CD8-positive, alpha-beta T cell (primary cell): ENCODE measurements at regions of chr1 and their contacts with region 1.

Region 1: GRCh38 chr1:6602669-6603237 is at the start of gene KLHL21:
- DNase-seq: peak; percentile 68 to 94 (median 85)
- ATAC-seq: peak; percentile 56
- H3K4me3 ChIP-seq: peak within 1 kb of the TSS; percentile 87 to 89
- H3K4me3 Mint-ChIP-seq: peak within 1 kb of the TSS; percentile 97
- H3K27ac ChIP-seq: peak within 1 kb of the TSS; percentile 91 to 96
- H3K27ac Mint-ChIP-seq: peak within 1 kb of the TSS; percentile 97
- H3K4me1 ChIP-seq: peaks cover 34% of the 10 kb centered on the region
- H3K4me1 Mint-ChIP-seq: peaks cover 34% of the 10 kb centered on the region
- H3K27me3 ChIP-seq: no peaks in the 10 kb centered on the region
- H3K27me3 Mint-ChIP-seq: no peaks in the 10 kb centered on the region
- CTCF ChIP-seq: no peak
- total RNA-seq, gene KLHL21: 33.3 to 33.4 TPM

Region 2: DNA sequence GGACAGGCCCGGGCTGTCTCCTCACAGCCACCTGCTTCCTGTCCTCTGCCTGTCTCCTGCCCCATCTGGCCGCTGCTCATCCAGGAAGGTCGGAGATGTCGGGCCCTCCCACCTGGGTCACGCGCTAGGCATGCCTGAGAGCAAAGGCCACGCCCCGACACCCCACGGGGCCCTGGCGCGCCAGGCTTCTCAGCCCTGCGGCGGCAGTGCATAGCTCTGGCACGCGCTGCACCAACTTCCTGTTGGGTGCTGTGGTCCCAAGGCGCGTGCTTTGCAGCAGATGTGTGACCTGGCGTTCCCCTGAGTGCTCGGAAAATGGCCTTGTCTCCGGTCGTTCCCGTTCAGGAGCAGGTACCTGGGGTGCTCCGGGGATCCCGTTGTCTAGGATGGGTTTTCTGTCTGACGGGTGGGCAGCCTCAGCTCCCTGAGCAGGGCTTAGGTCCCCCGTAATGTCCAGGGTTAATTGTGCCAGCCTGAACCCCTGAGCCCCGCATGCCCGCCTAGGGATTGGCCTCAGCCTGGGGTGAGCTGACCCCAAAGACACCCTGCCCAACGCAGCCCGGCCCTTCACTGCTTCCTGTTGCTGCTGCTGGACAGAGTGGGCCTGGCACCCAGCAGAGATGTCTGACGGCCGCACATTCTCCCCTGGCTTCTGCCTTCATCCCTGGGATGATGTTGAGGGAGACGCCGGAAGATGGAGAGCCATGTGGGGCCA is 576.5 kb before region 1 on chr1:
- CTCF ChIA-PET with region 1: no interaction called
- POLR2A ChIA-PET with region 1: no interaction called
- intact Hi-C with region 1: loop called in 1 of 2 experiments (anchors 2 kb)
- DNase-seq: peak; percentile 87 to 98 (median 94)
- ATAC-seq: peak; percentile 73
- H3K4me3 ChIP-seq: peak overlapping the region; percentile 76 to 93
- H3K4me3 Mint-ChIP-seq: peak overlapping the region; percentile 90
- H3K27ac ChIP-seq: peak overlapping the region; percentile 85 to 94
- H3K27ac Mint-ChIP-seq: peak overlapping the region; percentile 99
- H3K4me1 ChIP-seq: peaks cover 54% of the 10 kb centered on the region
- H3K4me1 Mint-ChIP-seq: peaks cover 55% of the 10 kb centered on the region
- H3K27me3 ChIP-seq: no peaks in the 10 kb centered on the region
- H3K27me3 Mint-ChIP-seq: no peaks in the 10 kb centered on the region
- CTCF ChIP-seq: no peak

Region 3: DNA sequence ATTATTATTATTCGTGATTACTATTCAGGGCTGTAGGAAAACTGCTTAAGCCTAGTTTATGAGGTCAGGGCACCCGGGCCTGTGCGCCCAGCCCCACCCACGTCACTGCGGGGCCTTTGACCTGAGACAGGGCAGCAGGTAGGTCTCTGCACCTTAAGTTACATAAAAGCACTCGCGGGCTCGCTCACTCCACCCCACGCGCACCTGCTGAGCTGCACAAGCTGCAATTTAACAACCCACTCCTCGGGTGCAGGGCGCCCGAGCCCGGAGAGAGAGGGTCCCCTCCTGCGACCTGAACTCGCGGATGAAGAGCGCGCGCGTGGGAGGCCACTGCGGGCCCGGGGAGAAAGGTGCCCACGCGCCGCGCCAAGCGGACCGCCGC is 367.5 kb before region 1 on chr1:
- CTCF ChIA-PET with region 1: no interaction called
- POLR2A ChIA-PET with region 1: no interaction called
- intact Hi-C with region 1: loop called in 1 of 2 experiments (anchors 5 kb)
- DNase-seq: peak in 3 of 9 experiments; percentile 15 to 38 (median 17)
- ATAC-seq: peak; percentile 16
- H3K4me3 ChIP-seq: peak overlapping the region; percentile 62 to 63
- H3K4me3 Mint-ChIP-seq: peak overlapping the region; percentile 88
- H3K27ac ChIP-seq: peak overlapping the region in 1 of 2 experiments; percentile 21
- H3K27ac Mint-ChIP-seq: peak overlapping the region; percentile 45
- H3K4me1 ChIP-seq: peaks cover 12% of the 10 kb centered on the region
- H3K4me1 Mint-ChIP-seq: peaks cover 16% of the 10 kb centered on the region
- H3K27me3 ChIP-seq: peaks cover 4% of the 10 kb centered on the region in 2 experiments
- H3K27me3 Mint-ChIP-seq: peaks cover 10% of the 10 kb centered on the region
- CTCF ChIP-seq: no peak

Region 4: DNA sequence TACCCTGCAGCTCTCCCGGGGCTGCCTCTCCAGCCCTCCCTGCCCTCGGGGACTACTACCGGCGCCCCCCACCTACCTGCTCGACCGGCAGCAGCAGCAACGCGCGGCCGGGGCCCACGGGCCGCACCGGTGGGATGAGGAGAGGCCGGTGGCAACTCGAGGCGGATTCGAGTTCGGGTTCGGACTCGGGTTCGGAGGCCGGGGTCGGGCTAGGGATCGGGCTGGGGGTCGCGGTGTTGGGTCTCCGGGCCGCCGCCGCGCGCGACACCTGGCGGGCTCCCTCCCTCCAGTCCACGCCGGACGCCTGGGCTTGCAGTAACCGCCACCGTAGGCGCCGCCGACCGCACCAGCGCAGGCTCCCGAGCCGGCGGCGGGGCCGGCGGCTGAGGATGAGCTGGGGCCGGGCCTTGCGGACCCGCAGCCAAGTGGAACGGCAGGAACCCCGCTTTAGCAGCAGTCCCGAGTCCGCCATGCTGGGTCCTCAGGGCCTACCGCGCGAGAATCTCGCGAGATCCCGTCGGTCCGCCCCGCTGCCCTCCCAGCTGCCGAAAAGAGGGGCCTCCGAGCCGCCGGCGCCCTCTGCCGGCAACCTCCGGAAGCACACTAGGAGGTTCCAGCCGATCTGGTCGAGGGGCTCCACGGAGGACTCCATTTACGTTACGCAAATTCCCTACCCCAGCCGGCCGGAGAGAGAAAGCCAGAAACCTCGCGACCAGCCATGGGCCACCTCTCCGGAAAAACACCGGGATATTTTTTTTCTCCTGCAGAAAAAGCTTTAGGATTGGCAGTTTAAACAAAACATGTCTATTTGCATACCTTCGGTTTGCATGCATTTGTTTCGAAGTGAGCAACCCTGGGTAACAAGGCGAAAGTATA is 48.5 kb before region 1 on chr1 and contains the start of gene NOL9:
- CTCF ChIA-PET with region 1: interaction called, 40 read pairs
- POLR2A ChIA-PET with region 1: interaction called, 11 read pairs
- intact Hi-C with region 1: loop called (anchors 1 kb)
- DNase-seq: peak; percentile 91 to 98 (median 94)
- ATAC-seq: peak; percentile 99
- H3K4me3 ChIP-seq: peak within 1 kb of the TSS; percentile 91 to 92
- H3K4me3 Mint-ChIP-seq: peak within 1 kb of the TSS; percentile 77
- H3K27ac ChIP-seq: peak within 1 kb of the TSS; percentile 43 to 81
- H3K27ac Mint-ChIP-seq: peak within 1 kb of the TSS; percentile 75
- H3K4me1 ChIP-seq: peaks cover 20% of the 10 kb centered on the region
- H3K4me1 Mint-ChIP-seq: peaks cover 15% of the 10 kb centered on the region
- H3K27me3 ChIP-seq: no peaks in the 10 kb centered on the region
- H3K27me3 Mint-ChIP-seq: no peaks in the 10 kb centered on the region
- CTCF ChIP-seq: peak; percentile 88
- total RNA-seq, gene NOL9: 67.9 to 71.8 TPM

Region 5: DNA sequence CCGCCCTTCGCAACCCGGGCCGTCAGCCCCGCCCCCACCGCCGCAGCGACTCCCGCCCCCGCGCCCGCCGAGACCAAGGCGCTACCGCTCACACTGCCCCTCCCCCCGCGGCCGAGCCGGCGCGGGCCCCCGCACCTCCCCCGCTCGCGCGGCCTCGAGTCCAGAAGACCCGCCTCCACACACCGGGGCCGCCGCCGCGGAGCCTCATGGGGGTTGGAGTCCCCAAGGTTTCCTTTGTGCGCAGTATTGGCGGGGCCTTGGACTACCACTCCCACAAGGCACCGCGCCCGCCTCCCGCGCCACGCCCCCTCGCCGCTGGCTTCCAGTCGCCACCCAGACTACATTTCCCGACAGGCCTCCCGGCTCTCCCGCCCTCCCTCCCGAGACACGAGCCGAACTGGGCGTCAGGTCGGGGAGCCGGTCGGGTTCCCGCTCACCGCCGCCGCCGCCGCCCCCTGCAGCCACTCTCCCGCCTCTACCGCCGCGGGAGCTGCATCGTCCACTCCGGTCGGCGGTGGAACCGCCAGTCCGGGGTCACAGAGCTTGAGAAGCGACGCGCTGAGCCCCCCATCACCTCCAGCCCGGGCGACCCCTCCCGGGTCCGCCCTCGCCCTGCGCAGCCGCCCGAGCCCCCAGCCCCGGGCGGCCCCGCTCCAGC is 10.7 kb after region 1 on chr1 and contains the start of gene PHF13:
- CTCF ChIA-PET with region 1: interaction called, 13 read pairs
- POLR2A ChIA-PET with region 1: interaction called, 31 read pairs
- intact Hi-C with region 1: loop called (anchors 1 kb)
- DNase-seq: peak; percentile 98 to 100 (median 99)
- ATAC-seq: peak; percentile 93
- H3K4me3 ChIP-seq: peak within 1 kb of the TSS; percentile 70 to 72
- H3K4me3 Mint-ChIP-seq: peak within 1 kb of the TSS; percentile 90
- H3K27ac ChIP-seq: peak within 1 kb of the TSS; percentile 9 to 55
- H3K27ac Mint-ChIP-seq: peak within 1 kb of the TSS; percentile 86
- H3K4me1 ChIP-seq: peaks cover 18% of the 10 kb centered on the region
- H3K4me1 Mint-ChIP-seq: peaks cover 31% of the 10 kb centered on the region
- H3K27me3 ChIP-seq: no peaks in the 10 kb centered on the region
- H3K27me3 Mint-ChIP-seq: no peaks in the 10 kb centered on the region
- CTCF ChIP-seq: no peak
- total RNA-seq, gene PHF13: 3.3 to 3.5 TPM

Region 6: DNA sequence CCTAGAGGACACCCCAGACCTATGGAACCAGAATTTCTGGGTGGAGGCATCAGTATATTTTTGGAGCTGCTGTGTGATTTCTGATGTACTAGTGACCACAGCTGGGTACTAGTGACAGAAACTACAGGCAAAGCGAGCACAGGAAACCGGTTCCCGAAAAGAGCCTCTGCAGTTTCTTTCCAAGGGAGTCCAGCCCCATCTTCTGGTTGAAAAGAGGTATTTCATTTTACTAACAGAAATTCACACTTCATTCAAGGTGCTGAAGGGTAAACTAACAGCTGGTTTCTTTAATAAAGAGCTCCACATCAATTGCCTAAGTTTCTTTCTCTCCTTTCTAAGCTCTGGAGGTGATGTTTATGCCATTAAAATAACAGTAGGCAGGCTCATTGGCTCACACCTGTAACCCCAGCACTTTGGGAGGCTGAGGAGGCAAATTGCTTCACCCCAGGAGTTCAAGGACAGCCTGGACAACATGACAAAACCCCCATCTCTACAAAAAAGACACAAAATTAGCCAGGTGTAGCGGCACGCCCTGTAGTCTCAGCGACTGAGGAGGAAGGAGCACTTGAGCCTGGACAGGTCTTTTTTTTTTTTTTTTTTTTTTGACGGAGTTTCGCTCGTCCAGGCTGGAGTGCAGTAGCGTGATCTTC is 43.9 kb after region 1 on chr1:
- CTCF ChIA-PET with region 1: interaction called, 14 read pairs
- POLR2A ChIA-PET with region 1: interaction called, 9 read pairs
- intact Hi-C with region 1: no loop called
- DNase-seq: peak in 6 of 9 experiments; percentile 8 to 69 (median 30)
- ATAC-seq: peak; percentile 74
- H3K4me3 ChIP-seq: no peak overlapping the region
- H3K4me3 Mint-ChIP-seq: no peak overlapping the region
- H3K27ac ChIP-seq: no peak overlapping the region
- H3K27ac Mint-ChIP-seq: no peak overlapping the region
- H3K4me1 ChIP-seq: no peaks in the 10 kb centered on the region
- H3K4me1 Mint-ChIP-seq: peaks cover 3% of the 10 kb centered on the region
- H3K27me3 ChIP-seq: no peaks in the 10 kb centered on the region
- H3K27me3 Mint-ChIP-seq: no peaks in the 10 kb centered on the region
- CTCF ChIP-seq: peak; percentile 64

Region 7: GRCh38 chr1:6784560-6785317 is 182.0 kb after region 1 on chr1:
- CTCF ChIA-PET with region 1: no interaction called
- POLR2A ChIA-PET with region 1: interaction called, 7 read pairs
- intact Hi-C with region 1: loop called (anchors 2 to 5 kb)
- DNase-seq: peak; percentile 97 to 100 (median 99)
- ATAC-seq: peak; percentile 81
- H3K4me3 ChIP-seq: peak overlapping the region; percentile 80
- H3K4me3 Mint-ChIP-seq: peak overlapping the region; percentile 95
- H3K27ac ChIP-seq: peak overlapping the region; percentile 73 to 93
- H3K27ac Mint-ChIP-seq: peak overlapping the region; percentile 91
- H3K4me1 ChIP-seq: peaks cover 25% of the 10 kb centered on the region
- H3K4me1 Mint-ChIP-seq: peaks cover 44% of the 10 kb centered on the region
- H3K27me3 ChIP-seq: no peaks in the 10 kb centered on the region
- H3K27me3 Mint-ChIP-seq: no peaks in the 10 kb centered on the region
- CTCF ChIP-seq: no peak